CD8-positive, alpha-beta T cell (primary cell): ENCODE measurements at regions of chr3 and their contacts with region 1.

Region 1: GRCh38 chr3:48556793-48557626 is at the start of gene PFKFB4:
- DNase-seq: peak; percentile 97 to 100 (median 99)
- ATAC-seq: peak; percentile 88
- H3K4me3 ChIP-seq: peak within 1 kb of the TSS; percentile 61 to 76
- H3K4me3 Mint-ChIP-seq: peak within 1 kb of the TSS; percentile 87
- H3K27ac ChIP-seq: peak within 1 kb of the TSS in 1 of 2 experiments; percentile 46
- H3K27ac Mint-ChIP-seq: peak within 1 kb of the TSS; percentile 81
- H3K4me1 ChIP-seq: peaks cover 7% of the 10 kb centered on the region
- H3K4me1 Mint-ChIP-seq: peaks cover 23% of the 10 kb centered on the region
- H3K27me3 ChIP-seq: no peaks in the 10 kb centered on the region
- H3K27me3 Mint-ChIP-seq: no peaks in the 10 kb centered on the region
- CTCF ChIP-seq: no peak
- total RNA-seq, gene PFKFB4: 1.2 to 1.3 TPM

Region 2: GRCh38 chr3:48232734-48233133 is 324.3 kb before region 1 on chr3:
- CTCF ChIA-PET with region 1: interaction called, 3 read pairs
- POLR2A ChIA-PET with region 1: no interaction called
- intact Hi-C with region 1: loop called in 1 of 2 experiments (anchors 2 kb)
- DNase-seq: peak; percentile 31 to 75 (median 63)
- ATAC-seq: peak; percentile 95
- H3K4me3 ChIP-seq: no peak overlapping the region
- H3K4me3 Mint-ChIP-seq: no peak overlapping the region
- H3K27ac ChIP-seq: no peak overlapping the region
- H3K27ac Mint-ChIP-seq: peak overlapping the region; percentile 11
- H3K4me1 ChIP-seq: no peaks in the 10 kb centered on the region
- H3K4me1 Mint-ChIP-seq: peaks cover 9% of the 10 kb centered on the region
- H3K27me3 ChIP-seq: no peaks in the 10 kb centered on the region
- H3K27me3 Mint-ChIP-seq: no peaks in the 10 kb centered on the region
- CTCF ChIP-seq: peak; percentile 48

Region 3: DNA sequence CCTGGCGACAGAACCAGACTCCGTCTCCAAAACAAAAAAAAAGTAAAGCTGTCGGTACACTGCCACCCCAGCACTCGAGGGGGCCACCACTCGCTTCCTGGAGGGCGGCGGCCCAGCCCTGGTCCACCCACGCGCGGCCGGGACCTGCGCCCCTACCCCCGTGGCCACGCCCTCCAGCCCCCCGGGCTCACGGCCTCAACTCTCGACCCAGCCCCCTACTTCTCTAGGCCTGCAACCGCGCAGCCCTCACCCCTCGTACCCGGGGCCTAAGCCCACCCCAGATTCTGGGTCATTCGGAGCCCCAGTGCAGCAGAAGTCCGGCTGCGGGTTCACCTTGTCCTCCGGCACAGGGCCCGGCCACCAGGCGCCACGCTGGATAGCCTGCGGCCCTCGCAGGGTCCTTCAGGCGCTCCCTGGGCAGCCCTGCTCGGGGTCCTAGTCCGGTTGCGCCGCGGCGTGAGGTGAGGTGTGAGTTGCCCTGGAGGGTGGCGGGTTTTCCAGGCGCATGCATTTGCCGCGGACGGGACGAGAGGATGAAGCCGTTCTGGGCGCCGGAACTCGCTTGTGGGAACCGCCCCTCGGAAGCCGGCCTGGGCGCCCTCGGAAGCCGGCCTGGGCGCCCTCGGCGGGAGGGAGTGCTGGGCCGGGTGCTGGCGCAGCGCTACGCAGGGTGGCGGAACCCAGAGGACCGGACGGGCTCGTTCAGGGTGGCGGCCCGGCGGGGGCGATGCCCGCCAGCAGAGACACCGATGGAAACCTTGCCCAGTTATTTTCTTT is 255.8 kb before region 1 on chr3:
- CTCF ChIA-PET with region 1: no interaction called
- POLR2A ChIA-PET with region 1: no interaction called
- intact Hi-C with region 1: loop called in 1 of 2 experiments (anchors 1 kb)
- DNase-seq: peak; percentile 82 to 94 (median 90)
- ATAC-seq: peak; percentile 85
- H3K4me3 ChIP-seq: peak within 1 kb of the TSS; percentile 85 to 97
- H3K4me3 Mint-ChIP-seq: peak within 1 kb of the TSS; percentile 87
- H3K27ac ChIP-seq: peak within 1 kb of the TSS; percentile 85 to 90
- H3K27ac Mint-ChIP-seq: peak within 1 kb of the TSS; percentile 91
- H3K4me1 ChIP-seq: peaks cover 23% of the 10 kb centered on the region
- H3K4me1 Mint-ChIP-seq: peaks cover 34% of the 10 kb centered on the region
- H3K27me3 ChIP-seq: no peaks in the 10 kb centered on the region
- H3K27me3 Mint-ChIP-seq: no peaks in the 10 kb centered on the region
- CTCF ChIP-seq: no peak

Region 4: DNA sequence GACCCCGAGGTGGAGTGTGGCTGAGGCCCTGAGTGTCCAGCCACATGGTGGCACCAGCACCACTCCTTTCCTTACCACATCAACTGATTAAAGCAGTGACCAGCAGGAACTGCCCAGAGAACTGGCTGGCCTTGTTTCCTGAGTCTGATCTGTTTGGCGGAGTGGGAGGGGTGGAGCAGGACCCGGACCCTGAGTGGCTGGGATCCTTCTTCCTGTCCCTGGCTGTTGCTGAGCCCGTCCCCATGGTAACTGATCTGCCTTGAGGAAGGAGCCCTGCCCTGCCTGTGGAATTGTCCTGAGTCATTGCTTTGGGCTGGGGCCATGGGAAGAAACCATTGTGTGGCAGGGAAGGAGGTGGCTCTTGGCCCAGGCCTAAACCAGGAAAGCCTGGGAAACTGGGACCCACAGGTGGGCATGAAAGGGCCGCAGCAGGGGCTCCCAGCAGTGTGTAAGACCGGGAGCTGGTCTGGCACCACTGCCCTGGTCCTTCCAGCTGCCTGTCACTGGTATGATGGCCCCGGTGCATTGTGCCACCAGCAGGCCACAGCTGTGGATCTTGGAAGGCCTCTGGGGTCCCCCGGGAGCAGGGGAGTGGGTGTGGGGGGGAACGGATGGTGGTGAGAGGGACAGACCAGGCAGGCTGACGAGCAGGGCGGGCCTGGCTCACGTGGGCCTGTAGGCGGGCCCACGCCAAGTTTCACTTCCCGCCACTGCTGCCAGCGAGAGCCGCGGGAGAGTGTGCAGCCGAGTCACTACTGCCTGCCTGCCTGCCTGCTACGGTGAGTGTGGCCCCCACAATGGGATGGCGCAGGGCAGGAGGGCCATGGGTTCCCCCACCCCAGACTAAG is 91.3 kb before region 1 on chr3:
- CTCF ChIA-PET with region 1: interaction called, 4 read pairs
- POLR2A ChIA-PET with region 1: no interaction called
- intact Hi-C with region 1: loop called in 1 of 2 experiments (anchors 2 kb)
- DNase-seq: peak; percentile 51 to 87 (median 81)
- ATAC-seq: peak; percentile 93
- H3K4me3 ChIP-seq: peak overlapping the region; percentile 77 to 95
- H3K4me3 Mint-ChIP-seq: peak overlapping the region; percentile 87
- H3K27ac ChIP-seq: peak overlapping the region; percentile 90 to 98
- H3K27ac Mint-ChIP-seq: peak overlapping the region; percentile 97
- H3K4me1 ChIP-seq: peaks cover 53% of the 10 kb centered on the region
- H3K4me1 Mint-ChIP-seq: peaks cover 55% of the 10 kb centered on the region
- H3K27me3 ChIP-seq: no peaks in the 10 kb centered on the region
- H3K27me3 Mint-ChIP-seq: no peaks in the 10 kb centered on the region
- CTCF ChIP-seq: no peak

Region 5: DNA sequence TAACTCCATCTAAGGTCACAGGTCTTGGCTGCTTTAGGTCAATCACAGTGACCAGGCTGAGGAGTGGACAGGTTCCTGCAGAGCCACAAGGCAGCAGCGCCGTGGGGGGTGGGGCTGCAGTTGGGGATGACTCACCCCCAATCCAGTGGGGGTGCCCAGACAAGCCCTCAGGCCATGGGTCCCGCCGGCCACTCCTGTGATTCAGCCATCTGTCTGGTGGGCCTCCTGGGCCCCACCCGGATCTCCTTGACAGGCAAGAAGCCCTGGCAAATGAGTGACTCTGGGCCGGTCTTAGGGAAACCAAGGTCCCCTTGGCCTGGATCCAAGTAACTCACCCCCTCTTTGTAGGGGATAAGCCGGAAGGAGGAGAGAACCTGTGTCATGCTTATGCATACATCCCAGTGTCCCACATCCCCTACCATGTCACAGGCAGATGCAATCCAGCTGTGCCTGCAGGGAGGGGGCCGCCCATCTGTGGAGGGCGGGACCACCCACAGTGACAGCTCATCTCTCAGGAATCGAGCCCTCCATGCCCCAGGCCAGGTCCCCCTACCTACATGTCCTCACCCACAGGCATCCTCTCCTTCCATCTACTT is 38.6 kb after region 1 on chr3:
- CTCF ChIA-PET with region 1: no interaction called
- POLR2A ChIA-PET with region 1: no interaction called
- intact Hi-C with region 1: no loop called
- DNase-seq: peak in 1 of 9 experiments; percentile 9
- ATAC-seq: peak; percentile 11
- H3K4me3 ChIP-seq: no peak overlapping the region
- H3K4me3 Mint-ChIP-seq: no peak overlapping the region
- H3K27ac ChIP-seq: no peak overlapping the region
- H3K27ac Mint-ChIP-seq: no peak overlapping the region
- H3K4me1 ChIP-seq: no peaks in the 10 kb centered on the region
- H3K4me1 Mint-ChIP-seq: peaks cover 10% of the 10 kb centered on the region
- H3K27me3 ChIP-seq: peaks cover 0 to 2% of the 10 kb centered on the region in 2 experiments
- H3K27me3 Mint-ChIP-seq: peaks cover 25% of the 10 kb centered on the region
- CTCF ChIP-seq: no peak

Region 6: GRCh38 chr3:48609088-48610005 is 52.3 kb after region 1 on chr3 and contains the start of gene UQCRC1:
- CTCF ChIA-PET with region 1: no interaction called
- POLR2A ChIA-PET with region 1: no interaction called
- intact Hi-C with region 1: loop called (anchors 1 to 2 kb)
- DNase-seq: peak; percentile 82 to 96 (median 90)
- ATAC-seq: peak; percentile 99
- H3K4me3 ChIP-seq: peak within 1 kb of the TSS; percentile 78 to 99
- H3K4me3 Mint-ChIP-seq: peak within 1 kb of the TSS; percentile 99
- H3K27ac ChIP-seq: peak within 1 kb of the TSS; percentile 68 to 87
- H3K27ac Mint-ChIP-seq: peak within 1 kb of the TSS; percentile 98
- H3K4me1 ChIP-seq: peaks cover 15% of the 10 kb centered on the region
- H3K4me1 Mint-ChIP-seq: peaks cover 16% of the 10 kb centered on the region
- H3K27me3 ChIP-seq: no peaks in the 10 kb centered on the region
- H3K27me3 Mint-ChIP-seq: no peaks in the 10 kb centered on the region
- CTCF ChIP-seq: peak; percentile 78
- total RNA-seq, gene UQCRC1: 84.2 to 92.5 TPM

Region 7: GRCh38 chr3:48663415-48664312 is 106.7 kb after region 1 on chr3:
- CTCF ChIA-PET with region 1: no interaction called
- POLR2A ChIA-PET with region 1: no interaction called
- intact Hi-C with region 1: no loop called
- DNase-seq: peak; percentile 70 to 93 (median 79)
- ATAC-seq: peak; percentile 78
- H3K4me3 ChIP-seq: peak overlapping the region; percentile 61 to 65
- H3K4me3 Mint-ChIP-seq: peak overlapping the region; percentile 75
- H3K27ac ChIP-seq: peak overlapping the region in 1 of 2 experiments; percentile 30
- H3K27ac Mint-ChIP-seq: no peak overlapping the region
- H3K4me1 ChIP-seq: peaks cover 30% of the 10 kb centered on the region
- H3K4me1 Mint-ChIP-seq: peaks cover 9% of the 10 kb centered on the region
- H3K27me3 ChIP-seq: peaks cover 14 to 21% of the 10 kb centered on the region in 2 experiments
- H3K27me3 Mint-ChIP-seq: peaks cover 23% of the 10 kb centered on the region
- CTCF ChIP-seq: peak; percentile 56

Region 8: GRCh38 chr3:48716982-48717746 is 160.2 kb after region 1 on chr3 and contains the start of gene IP6K2:
- CTCF ChIA-PET with region 1: interaction called, 3 read pairs
- POLR2A ChIA-PET with region 1: no interaction called
- intact Hi-C with region 1: loop called in 1 of 2 experiments (anchors 2 kb)
- DNase-seq: peak; percentile 97 to 99 (median 99)
- ATAC-seq: peak; percentile 99
- H3K4me3 ChIP-seq: peak within 1 kb of the TSS; percentile 90 to 100
- H3K4me3 Mint-ChIP-seq: peak within 1 kb of the TSS; percentile 99
- H3K27ac ChIP-seq: peak within 1 kb of the TSS; percentile 87 to 97
- H3K27ac Mint-ChIP-seq: peak within 1 kb of the TSS; percentile 97
- H3K4me1 ChIP-seq: peaks cover 27% of the 10 kb centered on the region
- H3K4me1 Mint-ChIP-seq: peaks cover 48% of the 10 kb centered on the region
- H3K27me3 ChIP-seq: no peaks in the 10 kb centered on the region
- H3K27me3 Mint-ChIP-seq: no peaks in the 10 kb centered on the region
- CTCF ChIP-seq: no peak
- total RNA-seq, gene IP6K2: 118 to 123 TPM

Region 9: DNA sequence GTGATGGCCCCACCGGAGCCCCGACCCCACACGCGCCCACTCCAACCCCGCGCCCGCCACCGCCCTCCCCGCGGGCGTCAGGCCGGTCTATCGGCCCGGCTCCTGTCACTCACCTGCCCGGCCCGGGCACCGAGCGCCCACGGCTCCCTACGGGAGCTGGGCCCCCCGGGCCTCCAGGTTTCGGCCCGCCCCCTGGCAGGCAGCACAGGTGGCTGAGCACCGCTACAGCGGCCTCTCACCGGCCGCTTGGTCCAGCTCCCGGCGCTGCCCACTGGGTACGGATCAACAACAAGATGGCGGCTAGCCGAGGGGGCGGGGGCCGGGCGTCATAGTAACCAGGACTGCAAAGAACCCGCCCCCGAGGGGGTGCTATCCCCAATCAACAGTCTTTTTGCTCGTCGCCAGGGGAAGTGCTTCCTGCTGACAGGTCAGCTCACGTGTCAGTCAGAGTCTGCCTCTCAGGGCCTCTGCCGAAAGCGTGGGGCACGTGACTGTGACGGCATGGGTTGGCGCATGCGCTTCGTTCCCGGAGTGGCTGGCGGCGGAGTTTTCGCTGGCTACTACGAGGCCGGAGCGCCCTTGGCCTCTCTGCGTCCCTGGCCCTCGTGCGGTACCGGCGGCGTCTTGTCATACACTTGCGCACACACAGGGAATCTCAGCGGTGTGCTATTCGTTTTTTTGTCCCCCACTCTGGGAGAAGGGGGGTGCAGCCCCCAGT is 1229.4 kb after region 1 on chr3 and contains the start of gene IP6K1:
- CTCF ChIA-PET with region 1: no interaction called
- POLR2A ChIA-PET with region 1: no interaction called
- intact Hi-C with region 1: loop called in 1 of 2 experiments (anchors 10 kb)
- DNase-seq: peak; percentile 98 to 100 (median 99)
- ATAC-seq: peak; percentile 98
- H3K4me3 ChIP-seq: peak within 1 kb of the TSS; percentile 86 to 87
- H3K4me3 Mint-ChIP-seq: peak within 1 kb of the TSS; percentile 95
- H3K27ac ChIP-seq: peak within 1 kb of the TSS; percentile 87 to 94
- H3K27ac Mint-ChIP-seq: peak within 1 kb of the TSS; percentile 99
- H3K4me1 ChIP-seq: peaks cover 29% of the 10 kb centered on the region
- H3K4me1 Mint-ChIP-seq: peaks cover 40% of the 10 kb centered on the region
- H3K27me3 ChIP-seq: no peaks in the 10 kb centered on the region
- H3K27me3 Mint-ChIP-seq: no peaks in the 10 kb centered on the region
- CTCF ChIP-seq: no peak
- total RNA-seq, gene IP6K1: 34.3 to 36.6 TPM